Ascending aorta (tissue), 2 donors: ENCODE measurements at regions of chr3 and their contacts with region 1.

Region 1: GRCh38 chr3:101573449-101574387 is at the start of gene PCNP:
- DNase-seq: peak; percentile 93 to 99
- H3K4me3 ChIP-seq: peak within 1 kb of the TSS; percentile 72 to 99
- H3K27ac ChIP-seq: peak within 1 kb of the TSS; percentile 98 to 99
- H3K4me1 ChIP-seq: peaks cover 11 to 24% of the 10 kb centered on the region in 2 donors
- H3K27me3 ChIP-seq: no peaks in the 10 kb centered on the region
- CTCF ChIP-seq: peak; percentile 84 to 88 (median 86)
- total RNA-seq, gene PCNP: 50.8 TPM

Region 2: DNA sequence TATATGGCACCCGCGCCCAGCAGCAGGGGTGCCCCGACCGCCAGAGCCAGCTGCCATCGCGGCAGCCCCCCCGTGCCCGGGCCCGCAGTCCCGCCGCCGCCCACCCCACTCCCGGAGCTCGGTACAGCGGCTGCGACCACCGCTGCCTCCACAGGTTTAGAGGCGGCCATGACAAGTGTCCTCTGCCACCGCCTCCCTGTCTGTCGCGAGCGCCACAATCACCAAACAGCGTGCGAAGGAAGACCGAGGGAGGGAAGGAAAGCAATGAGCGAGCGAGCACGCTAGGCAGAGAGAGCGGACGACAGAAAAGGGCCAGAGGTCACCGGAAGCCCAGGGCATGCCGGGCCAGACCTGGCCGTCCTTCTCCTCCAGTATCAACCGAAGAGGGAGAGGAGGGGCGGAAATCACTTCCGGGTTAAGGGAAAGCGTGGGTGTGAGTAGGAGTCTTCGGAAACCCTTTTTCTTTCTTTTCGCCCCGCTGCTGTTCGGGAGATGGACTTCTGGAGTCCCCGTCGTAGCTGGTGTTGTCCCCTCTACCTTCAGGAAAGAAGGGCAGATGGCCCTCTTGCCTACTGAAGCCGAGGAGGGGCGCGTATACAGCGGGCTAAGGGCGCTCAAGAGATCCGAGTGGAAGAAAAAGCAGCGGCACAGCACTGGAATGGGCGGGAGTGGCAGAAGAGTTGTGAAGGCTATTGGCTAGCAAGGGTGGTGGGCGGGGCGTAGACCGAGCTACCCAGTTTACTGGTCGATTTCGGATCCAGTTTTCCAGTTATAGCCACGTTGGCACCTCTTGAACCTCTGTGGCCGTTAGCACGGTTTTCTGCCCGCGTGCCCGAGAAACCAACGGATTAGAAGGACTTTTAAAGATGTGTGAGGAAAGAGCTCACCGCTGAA is 1172.7 kb before region 1 on chr3 and contains the starts of genes LNP1 and TOMM70:
- intact Hi-C with region 1: loop called (anchors 5 kb)
- DNase-seq: peak; percentile 92 to 99
- H3K4me3 ChIP-seq: peak within 1 kb of the TSS; percentile 89 to 92
- H3K27ac ChIP-seq: peak within 1 kb of the TSS; percentile 90 to 91
- H3K4me1 ChIP-seq: peaks cover 10 to 30% of the 10 kb centered on the region in 2 donors
- H3K27me3 ChIP-seq: no peaks in the 10 kb centered on the region
- CTCF ChIP-seq: no peak
- total RNA-seq, gene LNP1: 1.3 TPM
- total RNA-seq, gene TOMM70: 16.4 TPM

Region 3: GRCh38 chr3:100492059-100493006 is 1081.4 kb before region 1 on chr3 and contains the start of gene TMEM45A:
- intact Hi-C with region 1: loop called (anchors 5 kb)
- DNase-seq: peak; percentile 85 to 98
- H3K4me3 ChIP-seq: peak within 1 kb of the TSS; percentile 61 to 73
- H3K27ac ChIP-seq: peak within 1 kb of the TSS; percentile 85 to 89
- H3K4me1 ChIP-seq: peaks cover 0 to 7% of the 10 kb centered on the region in 2 donors
- H3K27me3 ChIP-seq: no peaks in the 10 kb centered on the region
- CTCF ChIP-seq: no peak
- total RNA-seq, gene TMEM45A: 30.9 TPM

Region 4: DNA sequence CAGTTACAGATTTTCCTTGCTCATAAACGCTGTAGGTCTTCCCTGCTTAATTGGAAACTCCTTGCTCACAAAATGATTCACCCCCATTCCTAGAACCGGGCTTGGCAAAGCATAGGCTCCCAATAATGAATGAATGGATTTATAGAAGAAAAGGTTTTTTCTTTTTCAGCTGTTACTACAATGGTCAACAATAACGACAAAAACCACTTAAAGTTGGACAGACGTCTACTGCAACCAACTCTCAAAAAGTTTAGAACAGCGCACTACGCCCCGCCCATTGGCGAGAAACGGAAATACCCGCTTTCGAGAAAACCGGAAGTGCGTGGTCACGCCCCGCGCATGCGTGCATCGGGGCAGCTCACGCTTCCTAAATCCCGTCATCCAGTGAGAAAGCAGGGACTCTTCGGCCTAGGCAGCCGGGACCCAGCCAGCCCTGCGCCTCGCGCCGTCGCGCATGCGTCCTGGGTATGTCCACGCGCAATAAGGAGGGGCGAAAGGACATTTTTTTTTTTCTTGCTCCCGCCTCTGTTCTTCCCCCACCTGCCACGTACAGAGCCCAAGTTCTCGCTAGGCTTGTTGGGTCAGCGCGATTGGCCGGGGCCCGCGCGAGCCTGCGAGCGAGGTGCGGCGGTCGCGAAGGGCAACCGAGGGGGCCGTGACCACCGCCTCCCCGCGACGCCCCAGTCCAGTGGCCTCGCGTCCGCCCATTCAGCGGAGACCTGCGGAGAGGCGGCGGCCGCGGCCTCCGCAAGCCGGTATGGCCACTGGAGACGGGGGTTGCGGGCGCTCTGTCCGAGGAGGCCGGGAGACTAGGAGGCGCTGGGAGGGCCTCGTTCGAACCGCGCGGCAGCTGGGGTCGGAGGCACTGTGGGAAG is 864.5 kb before region 1 on chr3 and contains the start of gene TFG:
- intact Hi-C with region 1: loop called (anchors 1 kb)
- DNase-seq: peak; percentile 93 to 99
- H3K4me3 ChIP-seq: peak within 1 kb of the TSS; percentile 82 to 84
- H3K27ac ChIP-seq: peak within 1 kb of the TSS; percentile 95 to 97
- H3K4me1 ChIP-seq: peaks cover 0 to 22% of the 10 kb centered on the region in 2 donors
- H3K27me3 ChIP-seq: no peaks in the 10 kb centered on the region
- CTCF ChIP-seq: no peak
- total RNA-seq, gene TFG: 64.9 TPM

Region 5: DNA sequence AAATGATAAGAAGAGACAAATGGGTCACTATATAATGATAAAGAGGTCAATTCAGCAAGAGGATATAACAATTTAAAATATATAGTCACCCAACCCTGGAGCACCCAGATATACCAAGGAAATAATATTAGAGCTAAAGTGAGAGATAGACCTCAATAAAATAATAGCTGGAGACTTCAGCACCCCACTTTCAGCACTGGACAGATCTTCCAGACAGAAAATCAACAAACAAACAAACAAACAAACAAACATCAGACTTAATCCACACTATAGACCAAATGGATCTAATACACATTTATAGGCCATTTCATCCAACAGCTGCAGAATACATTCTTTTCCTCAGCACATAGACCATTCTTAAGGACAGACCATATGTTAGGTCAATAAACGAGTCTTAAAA is 140.1 kb before region 1 on chr3:
- intact Hi-C with region 1: no loop called
- DNase-seq: no peak
- H3K4me3 ChIP-seq: no peak overlapping the region
- H3K27ac ChIP-seq: no peak overlapping the region
- H3K4me1 ChIP-seq: no peaks in the 10 kb centered on the region
- H3K27me3 ChIP-seq: no peaks in the 10 kb centered on the region
- CTCF ChIP-seq: no peak

Region 6: DNA sequence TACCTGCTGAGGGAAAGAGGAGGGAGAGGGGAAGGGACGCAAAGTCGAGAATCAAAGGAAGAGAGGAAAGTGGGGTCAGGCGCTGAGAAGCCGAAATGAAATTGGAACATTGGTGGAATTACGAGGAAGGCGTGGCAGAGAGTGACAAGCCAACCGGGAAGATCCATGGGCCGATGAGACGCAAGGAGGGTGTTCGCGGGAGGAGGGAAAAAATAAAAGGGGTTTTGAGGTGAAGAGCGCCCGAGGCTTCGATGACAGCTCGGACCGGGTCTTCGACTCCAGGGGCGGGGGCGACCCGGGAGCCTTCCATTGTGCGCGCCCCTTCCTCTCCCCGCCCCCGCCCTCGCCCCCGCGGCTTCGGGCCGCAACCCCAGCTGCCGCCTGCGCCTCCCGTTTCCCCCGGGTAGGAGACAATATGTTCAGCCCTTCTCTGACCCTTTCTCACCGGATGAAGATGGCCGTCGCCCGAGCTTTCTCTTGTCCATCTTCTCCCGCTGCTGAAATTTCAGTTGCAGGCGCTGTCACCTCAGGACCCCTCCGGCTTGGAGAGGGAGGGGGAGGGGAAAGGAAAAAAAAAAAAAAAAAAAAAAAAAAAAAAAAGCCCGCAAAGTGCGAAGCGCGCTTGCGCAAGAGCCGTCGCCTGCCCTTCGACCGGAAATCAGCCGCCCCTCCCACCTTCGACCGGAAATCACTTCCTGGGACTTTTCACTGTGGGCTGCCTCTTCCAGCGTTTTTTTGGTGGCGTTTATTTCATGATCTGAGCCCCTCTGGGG is 60.9 kb before region 1 on chr3 and contains the start of gene SENP7:
- intact Hi-C with region 1: loop called (anchors 2 kb)
- DNase-seq: peak; percentile 16 to 91
- H3K4me3 ChIP-seq: peak within 1 kb of the TSS; percentile 91 to 96
- H3K27ac ChIP-seq: peak within 1 kb of the TSS; percentile 91 to 92
- H3K4me1 ChIP-seq: no peaks in the 10 kb centered on the region
- H3K27me3 ChIP-seq: no peaks in the 10 kb centered on the region
- CTCF ChIP-seq: no peak
- total RNA-seq, gene SENP7: 6.1 TPM

Region 7: DNA sequence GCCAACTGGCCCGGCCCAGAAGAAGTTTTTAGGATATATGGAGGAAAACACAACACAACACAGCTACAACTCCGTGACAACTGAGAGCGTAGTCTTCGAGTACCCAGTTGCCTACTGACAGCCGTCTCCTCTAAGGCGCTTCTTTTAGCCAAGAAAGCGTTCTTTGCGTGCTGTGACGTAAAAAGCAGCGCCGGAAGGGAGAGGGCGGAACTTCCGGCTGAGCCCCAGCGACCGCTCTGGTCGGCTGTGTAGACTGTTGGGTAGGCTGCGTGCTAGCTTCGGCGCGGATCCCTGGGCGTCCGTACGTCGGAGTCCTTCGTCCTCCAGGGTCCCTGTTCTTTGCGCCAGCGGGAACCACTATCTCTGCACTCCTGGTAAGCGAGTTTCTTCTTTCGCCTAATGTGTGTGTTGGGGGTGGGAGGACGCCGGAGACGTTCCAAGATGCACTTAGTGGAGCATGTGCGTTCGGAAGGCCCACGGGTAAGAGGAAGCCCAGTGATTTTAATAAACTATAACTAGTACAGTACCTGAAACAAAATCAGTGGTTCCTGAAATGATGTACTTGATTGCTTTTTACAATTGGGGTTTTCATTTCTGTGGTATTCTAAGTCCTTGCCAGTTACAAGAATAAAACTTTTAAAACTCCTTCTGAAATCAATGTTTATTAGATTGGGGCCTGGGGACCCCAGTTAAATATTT is 11.9 kb before region 1 on chr3 and contains the start of gene TRMT10C:
- intact Hi-C with region 1: loop called (anchors 1 kb)
- DNase-seq: peak; percentile 60 to 95
- H3K4me3 ChIP-seq: peak within 1 kb of the TSS; percentile 84 to 94
- H3K27ac ChIP-seq: peak within 1 kb of the TSS; percentile 89 to 92
- H3K4me1 ChIP-seq: peaks cover 0 to 10% of the 10 kb centered on the region in 2 donors
- H3K27me3 ChIP-seq: no peaks in the 10 kb centered on the region
- CTCF ChIP-seq: no peak
- total RNA-seq, gene TRMT10C: 5.9 TPM

Region 8: DNA sequence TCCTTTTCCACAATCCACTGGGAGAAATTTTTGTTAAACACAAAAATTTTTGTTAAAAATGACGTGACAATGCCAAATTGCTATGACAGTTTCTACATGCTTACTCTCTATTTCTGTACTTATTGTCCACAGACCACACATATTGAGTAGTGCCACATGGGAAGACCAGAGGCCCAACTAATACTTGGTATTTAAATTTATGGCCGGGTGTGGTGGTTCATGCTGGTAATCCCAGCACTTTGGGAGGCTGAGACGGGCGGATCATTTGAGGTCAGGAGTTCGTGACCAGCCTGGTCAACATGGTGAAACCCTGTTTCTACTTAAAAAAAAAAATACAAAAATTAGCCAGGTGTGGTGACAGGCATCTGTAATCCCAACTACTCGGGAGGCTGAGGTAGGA is 82.9 kb after region 1 on chr3:
- intact Hi-C with region 1: no loop called
- DNase-seq: no peak
- H3K4me3 ChIP-seq: no peak overlapping the region
- H3K27ac ChIP-seq: no peak overlapping the region
- H3K4me1 ChIP-seq: peaks cover 0 to 4% of the 10 kb centered on the region in 2 donors
- H3K27me3 ChIP-seq: no peaks in the 10 kb centered on the region
- CTCF ChIP-seq: no peak

Region 9: DNA sequence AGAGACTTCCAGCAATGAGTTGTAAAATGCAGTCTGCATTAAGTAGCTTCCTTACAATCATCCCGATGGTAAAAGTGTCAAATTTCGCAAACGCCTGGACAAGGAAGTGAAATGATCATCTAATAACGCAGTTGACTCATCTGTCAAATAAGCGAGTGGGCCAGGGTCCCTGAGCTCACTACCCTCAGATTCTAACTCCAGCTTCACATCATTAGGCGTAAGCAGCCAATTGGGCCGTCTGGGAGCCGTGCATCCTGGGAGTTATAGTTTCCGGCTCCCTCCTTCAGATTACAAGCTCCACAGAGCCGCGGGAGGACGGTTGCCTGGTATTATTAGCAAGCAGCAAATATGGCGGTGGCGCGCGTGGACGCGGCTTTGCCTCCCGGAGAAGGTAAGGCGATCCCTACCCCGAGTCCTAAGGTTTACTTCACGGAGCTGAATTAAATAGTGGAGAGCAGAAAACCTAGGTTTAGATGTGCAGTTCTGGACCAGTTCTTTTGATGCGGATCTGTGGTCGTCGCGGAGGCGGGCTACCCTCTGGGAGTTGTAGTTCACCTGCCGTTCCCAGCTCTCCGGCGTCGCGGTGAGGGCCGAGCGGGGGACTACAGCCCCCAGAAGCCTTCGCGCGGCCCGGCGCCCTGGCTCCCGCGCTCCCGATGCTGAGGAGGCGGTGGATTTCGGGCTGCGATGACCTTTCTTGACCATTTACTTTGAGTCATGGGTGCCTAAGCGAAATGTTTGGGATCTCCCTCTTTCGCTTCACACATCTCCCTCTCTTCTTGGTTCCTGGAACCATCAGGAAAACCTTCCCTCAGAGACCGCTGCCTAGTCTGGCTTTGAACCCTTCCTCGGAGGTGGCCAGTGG is 150.8 kb after region 1 on chr3 and contains the start of gene CEP97:
- intact Hi-C with region 1: loop called (anchors 1 kb)
- DNase-seq: peak; percentile 80 to 96
- H3K4me3 ChIP-seq: peak within 1 kb of the TSS; percentile 70 to 75
- H3K27ac ChIP-seq: peak within 1 kb of the TSS; percentile 54 to 72
- H3K4me1 ChIP-seq: peaks cover 0 to 4% of the 10 kb centered on the region in 2 donors
- H3K27me3 ChIP-seq: no peaks in the 10 kb centered on the region
- CTCF ChIP-seq: peak in 1 of 3 experiments; percentile 6
- total RNA-seq, gene CEP97: 1.3 TPM

Region 10: GRCh38 chr3:102017784-102018183 is 444.1 kb after region 1 on chr3:
- intact Hi-C with region 1: no loop called
- DNase-seq: no peak
- H3K4me3 ChIP-seq: no peak overlapping the region
- H3K27ac ChIP-seq: no peak overlapping the region
- H3K4me1 ChIP-seq: no peaks in the 10 kb centered on the region
- H3K27me3 ChIP-seq: no peaks in the 10 kb centered on the region
- CTCF ChIP-seq: no peak